Activated T-helper 1 cell treated with anti-CD3 and anti-CD28 coated beads, Interleukin-12 subunit alpha, Interleukin-12 subunit beta, Interleukin-2, Interleukin-4 antibody, amounts not matched to agents 30 ng/mL and 10 ng/mL and 1 ng/mL, durations not matched to agents 14 hours and 24 hours and 36 hours (primary cell): ENCODE measurements at regions of chr2 and their contacts with region 1.

Region 1: DNA sequence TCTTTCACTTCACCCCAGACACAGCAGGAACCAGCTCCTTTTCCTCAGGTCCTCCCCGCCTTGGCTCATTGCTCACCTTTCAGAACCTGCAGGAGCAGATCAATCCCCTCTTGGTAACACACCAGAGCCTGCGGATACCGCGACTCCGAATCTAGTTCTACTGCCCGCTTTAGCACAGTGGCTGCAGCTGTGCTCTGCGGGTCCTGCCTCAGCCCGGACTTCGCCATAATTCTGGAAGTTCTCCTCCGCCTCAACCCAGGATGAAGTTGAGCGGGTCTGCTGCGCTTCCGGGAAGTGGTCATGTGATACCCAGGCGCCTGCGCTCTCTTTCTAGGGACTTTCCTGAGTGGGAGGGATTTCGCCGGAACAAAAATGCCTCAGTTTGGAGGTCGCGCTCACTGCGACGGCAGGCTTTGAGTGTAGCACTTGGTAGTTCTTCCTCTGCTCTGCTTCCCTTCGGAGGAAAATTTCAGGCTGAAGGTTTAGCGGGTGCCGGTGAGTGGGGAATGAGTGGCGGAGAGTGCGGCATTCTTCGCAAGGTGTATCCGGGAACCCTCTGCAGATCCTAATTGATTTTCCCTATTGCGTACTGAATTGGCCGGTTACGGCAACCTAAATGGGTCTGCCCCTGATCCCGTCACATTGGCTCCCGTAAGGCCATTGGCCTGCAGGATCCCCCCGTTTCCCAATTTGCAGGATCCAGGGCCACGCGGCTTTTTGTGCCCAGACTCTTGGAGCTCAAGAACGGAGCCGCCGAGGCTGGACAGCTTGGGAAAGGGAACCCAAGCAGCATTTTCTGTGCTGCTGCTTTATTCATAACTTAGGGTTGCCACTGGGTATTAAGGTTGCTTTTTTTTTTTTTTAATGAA is at the starts of genes MITD1 and MRPL30:
- DNase-seq: peak; percentile 90
- H3K4me3 Mint-ChIP-seq: peak within 1 kb of the TSS; percentile 99
- H3K27ac Mint-ChIP-seq: peak within 1 kb of the TSS; percentile 96
- H3K4me1 Mint-ChIP-seq: peaks cover 36% of the 10 kb centered on the region
- H3K27me3 Mint-ChIP-seq: no peaks in the 10 kb centered on the region
- total RNA-seq, gene MITD1: 45.3 and 50.1 TPM in 2 replicates
- total RNA-seq, gene MRPL30: 25.5 and 27.8 TPM in 2 replicates

Region 2: DNA sequence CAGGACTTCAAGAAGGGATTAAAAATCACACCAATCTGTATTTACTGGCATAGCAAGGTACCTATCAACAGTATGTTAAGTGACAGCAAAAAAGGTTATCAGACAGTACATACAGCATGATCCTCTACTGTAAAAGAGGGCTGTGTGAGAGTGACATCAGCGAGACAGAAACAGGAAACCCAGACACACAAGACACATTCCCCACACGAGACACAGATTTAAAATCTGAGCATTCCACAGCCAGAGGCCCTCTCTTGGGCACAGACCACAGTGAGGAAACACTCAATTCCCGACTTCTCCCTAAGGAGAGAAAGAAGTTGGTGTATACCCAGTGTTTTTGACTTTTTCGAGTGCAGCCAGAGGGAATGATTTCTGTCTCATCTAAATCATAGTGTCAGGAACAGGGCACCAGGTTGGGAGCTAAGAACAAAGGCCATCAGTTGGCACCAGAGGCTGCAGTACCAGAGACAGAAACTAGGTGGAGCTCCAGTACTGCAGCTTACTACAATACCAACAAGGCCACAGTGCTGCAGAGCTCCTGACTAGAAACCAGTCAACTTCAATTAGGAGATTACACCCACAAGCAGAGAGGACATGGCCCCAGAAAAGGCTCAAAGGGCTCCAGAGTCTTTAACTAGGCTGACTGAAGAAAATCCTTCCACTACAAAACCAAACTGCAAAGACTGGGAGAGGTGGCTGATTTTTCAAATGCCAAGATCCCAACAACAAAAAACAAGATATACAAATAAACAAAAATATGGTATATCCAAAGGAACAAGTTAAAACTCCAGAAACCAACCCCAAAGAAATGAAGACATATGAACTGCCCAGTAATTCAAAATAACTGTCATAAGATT is 531.6 kb before region 1 on chr2:
- intact Hi-C with region 1: loop called (anchors 2 kb)
- DNase-seq: peak; percentile 70
- H3K4me3 Mint-ChIP-seq: no peak overlapping the region
- H3K27ac Mint-ChIP-seq: peak overlapping the region; percentile 2
- H3K4me1 Mint-ChIP-seq: peaks cover 51% of the 10 kb centered on the region
- H3K27me3 Mint-ChIP-seq: no peaks in the 10 kb centered on the region

Region 3: DNA sequence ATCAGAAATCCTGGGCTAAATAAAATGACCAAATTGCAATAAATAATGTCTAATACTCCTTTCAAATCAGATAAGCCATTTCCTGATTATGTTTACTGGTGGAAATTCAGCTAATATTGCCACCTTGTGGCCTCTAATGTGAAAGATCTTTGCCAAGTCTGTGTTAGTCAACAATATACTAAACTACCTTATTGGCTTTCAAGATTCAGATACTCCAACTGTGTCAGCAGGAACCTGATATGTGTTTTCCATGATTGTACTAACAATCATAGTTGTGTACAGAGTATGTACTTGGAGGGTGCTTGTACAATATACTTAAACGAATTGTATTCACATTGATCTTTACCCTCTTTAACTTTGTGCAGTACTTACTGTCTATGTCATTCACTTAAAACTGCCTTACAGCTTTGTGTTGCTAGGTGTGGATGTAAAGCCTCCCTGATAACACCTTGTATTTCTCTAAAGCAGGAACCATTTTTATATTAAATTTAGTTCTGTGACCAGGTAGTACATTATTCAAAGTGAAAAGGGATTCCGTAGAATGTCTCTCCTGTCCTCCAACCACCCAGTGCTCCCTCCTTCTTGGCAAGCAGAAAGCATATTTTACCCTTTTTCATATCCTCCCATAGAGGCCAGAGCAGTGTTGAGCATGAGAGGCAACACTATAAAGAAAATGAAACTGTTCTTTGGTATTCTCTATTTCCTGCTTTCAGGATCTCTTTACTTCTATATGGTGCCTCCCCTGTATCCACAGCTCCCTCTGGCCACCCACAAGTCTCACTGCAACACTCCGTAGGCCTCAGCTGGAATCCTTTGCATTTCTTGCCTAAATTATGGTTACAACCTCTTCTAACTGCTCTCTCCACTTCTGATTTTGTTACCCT is 114.7 kb before region 1 on chr2:
- intact Hi-C with region 1: loop called (anchors 1 kb)
- DNase-seq: peak; percentile 6
- H3K4me3 Mint-ChIP-seq: no peak overlapping the region
- H3K27ac Mint-ChIP-seq: no peak overlapping the region
- H3K4me1 Mint-ChIP-seq: no peaks in the 10 kb centered on the region
- H3K27me3 Mint-ChIP-seq: peaks cover 6% of the 10 kb centered on the region

Region 4: GRCh38 chr2:99141110-99142108 is 39.6 kb before region 1 on chr2 and contains the start of gene C2orf15:
- intact Hi-C with region 1: loop called (anchors 1 kb)
- DNase-seq: peak; percentile 93
- H3K4me3 Mint-ChIP-seq: peak within 1 kb of the TSS; percentile 96
- H3K27ac Mint-ChIP-seq: peak within 1 kb of the TSS; percentile 82
- H3K4me1 Mint-ChIP-seq: peaks cover 10% of the 10 kb centered on the region
- H3K27me3 Mint-ChIP-seq: peaks cover 14% of the 10 kb centered on the region
- total RNA-seq, gene C2orf15: 0.29 TPM in 1 of 2 replicates, not detected in the other

Region 5: GRCh38 chr2:99201959-99202678 is 21.1 kb after region 1 on chr2:
- intact Hi-C with region 1: no loop called
- DNase-seq: no peak
- H3K4me3 Mint-ChIP-seq: no peak overlapping the region
- H3K27ac Mint-ChIP-seq: no peak overlapping the region
- H3K4me1 Mint-ChIP-seq: no peaks in the 10 kb centered on the region
- H3K27me3 Mint-ChIP-seq: no peaks in the 10 kb centered on the region

Region 6: GRCh38 chr2:99489761-99490622 is 309.0 kb after region 1 on chr2 and contains the start of gene REV1:
- intact Hi-C with region 1: loop called (anchors 1 kb)
- DNase-seq: peak; percentile 87
- H3K4me3 Mint-ChIP-seq: peak within 1 kb of the TSS; percentile 94
- H3K27ac Mint-ChIP-seq: peak within 1 kb of the TSS; percentile 97
- H3K4me1 Mint-ChIP-seq: peaks cover 35% of the 10 kb centered on the region
- H3K27me3 Mint-ChIP-seq: peaks cover 3% of the 10 kb centered on the region
- total RNA-seq, gene REV1: 49.6 and 53.7 TPM in 2 replicates